ENCODE measurements at regions of chr5 and their contacts with region 1.

Region 1: GRCh38 chr5:28216939-28217360 is 1178.6 kb upstream of the CDH9 start:
- DNase-seq: no peak
- H3K4me3 Mint-ChIP-seq: no peak overlapping the region
- H3K27ac Mint-ChIP-seq: no peak overlapping the region
- H3K4me1 Mint-ChIP-seq: no peaks in the 10 kb centered on the region
- H3K27me3 Mint-ChIP-seq: no peaks in the 10 kb centered on the region

Region 2: GRCh38 chr5:28499764-28500290 is 282.9 kb after region 1 on chr5:
- intact Hi-C with region 1: loop called (anchors 5 kb)
- DNase-seq: no peak
- H3K4me3 Mint-ChIP-seq: no peak overlapping the region
- H3K27ac Mint-ChIP-seq: no peak overlapping the region
- H3K4me1 Mint-ChIP-seq: no peaks in the 10 kb centered on the region
- H3K27me3 Mint-ChIP-seq: no peaks in the 10 kb centered on the region

Measured in activated T-helper 2 cell treated with anti-CD3 and anti-CD28 coated beads, Interferon-gamma antibody, Interleukin-2, Interleukin-4, amounts not matched to agents 10 μg/mL and 5 μg/mL and 100 μg/mL, durations not matched to agents 14 hours and 24 hours and 36 hours (primary cell).